ENCODE measurements at regions of chr2 and their contacts with region 1.

Region 1: GRCh38 chr2:19349911-19350677 is 8.3 kb downstream of the OSR1 start:
- DNase-seq: peak; percentile 87 to 95
- ATAC-seq: peak; percentile 65
- H3K4me3 ChIP-seq: no peak overlapping the region
- H3K27ac ChIP-seq: peak overlapping the region; percentile 85 to 92
- H3K4me1 ChIP-seq: peaks cover 0 to 2% of the 10 kb centered on the region in 2 donors
- H3K27me3 ChIP-seq: no peaks in the 10 kb centered on the region

Region 2: GRCh38 chr2:18435421-18436037 is 914.6 kb before region 1 on chr2:
- intact Hi-C with region 1: loop called (anchors 10 kb)
- DNase-seq: no peak
- ATAC-seq: peak; percentile 72
- H3K4me3 ChIP-seq: no peak overlapping the region
- H3K27ac ChIP-seq: no peak overlapping the region
- H3K4me1 ChIP-seq: peaks cover 0 to 2% of the 10 kb centered on the region in 2 donors
- H3K27me3 ChIP-seq: no peaks in the 10 kb centered on the region

Region 3: DNA sequence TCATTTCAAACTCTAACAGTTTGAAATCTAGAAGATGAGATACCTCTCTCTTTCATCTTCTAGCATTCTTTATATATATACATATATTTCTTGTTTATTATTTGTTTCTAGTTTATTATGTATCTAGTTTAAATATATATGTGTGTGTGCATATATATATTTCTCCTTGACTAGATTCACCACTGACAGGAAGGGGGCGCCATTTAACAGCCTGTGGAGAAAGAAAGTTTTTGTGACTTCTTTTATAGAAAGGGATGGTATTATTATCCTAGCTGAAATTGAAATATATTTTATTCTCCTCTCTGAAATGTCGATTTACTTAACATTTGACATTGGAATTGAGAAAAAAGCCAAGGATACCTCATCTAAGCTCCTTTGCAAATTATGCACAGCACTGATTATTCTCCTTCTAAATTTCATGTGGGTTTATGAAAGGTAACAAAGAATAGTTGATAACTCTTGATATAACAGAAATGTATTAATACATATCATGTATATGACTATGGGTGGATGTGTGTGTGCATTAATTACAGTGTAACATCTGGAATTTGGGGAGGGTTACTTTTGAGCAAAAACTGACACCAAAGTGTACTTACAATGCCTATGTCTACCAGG is 600.1 kb before region 1 on chr2:
- intact Hi-C with region 1: loop called in 1 of 2 experiments (anchors 5 kb)
- DNase-seq: peak; percentile 56 to 68
- ATAC-seq: peak; percentile 82
- H3K4me3 ChIP-seq: no peak overlapping the region
- H3K27ac ChIP-seq: no peak overlapping the region
- H3K4me1 ChIP-seq: peaks cover 0 to 2% of the 10 kb centered on the region in 2 donors
- H3K27me3 ChIP-seq: no peaks in the 10 kb centered on the region

Region 4: DNA sequence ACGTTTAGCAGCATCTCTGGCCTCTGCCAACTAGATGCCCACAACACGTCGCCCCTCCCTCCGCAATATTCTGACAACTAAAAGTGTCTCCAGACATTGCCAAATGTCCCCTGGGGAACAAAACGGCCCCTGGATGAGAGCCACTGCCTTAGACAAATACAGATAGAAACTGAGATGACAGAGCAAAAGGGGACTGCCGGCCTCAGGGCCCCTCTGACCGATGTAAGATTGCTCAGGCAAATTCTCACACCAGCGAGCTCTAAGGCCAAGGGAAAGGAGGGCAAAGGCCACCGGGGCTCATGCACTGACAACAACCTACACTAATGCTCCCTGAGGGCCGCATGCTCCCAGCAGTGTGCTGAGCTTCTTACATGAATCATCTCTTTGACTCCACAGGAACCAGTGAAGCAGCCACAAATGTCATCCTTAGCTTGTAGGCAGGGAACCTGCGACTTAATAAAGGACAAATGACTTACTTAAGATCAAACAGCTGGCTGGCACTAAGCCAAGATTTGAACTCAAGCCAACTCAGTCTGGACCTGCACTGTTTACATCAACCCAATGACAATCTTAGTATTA is 323.2 kb after region 1 on chr2:
- intact Hi-C with region 1: loop called in 1 of 2 experiments (anchors 10 kb)
- DNase-seq: no peak
- ATAC-seq: no peak
- H3K4me3 ChIP-seq: no peak overlapping the region
- H3K27ac ChIP-seq: no peak overlapping the region
- H3K4me1 ChIP-seq: peaks cover 0 to 2% of the 10 kb centered on the region in 2 donors
- H3K27me3 ChIP-seq: no peaks in the 10 kb centered on the region

Region 5: DNA sequence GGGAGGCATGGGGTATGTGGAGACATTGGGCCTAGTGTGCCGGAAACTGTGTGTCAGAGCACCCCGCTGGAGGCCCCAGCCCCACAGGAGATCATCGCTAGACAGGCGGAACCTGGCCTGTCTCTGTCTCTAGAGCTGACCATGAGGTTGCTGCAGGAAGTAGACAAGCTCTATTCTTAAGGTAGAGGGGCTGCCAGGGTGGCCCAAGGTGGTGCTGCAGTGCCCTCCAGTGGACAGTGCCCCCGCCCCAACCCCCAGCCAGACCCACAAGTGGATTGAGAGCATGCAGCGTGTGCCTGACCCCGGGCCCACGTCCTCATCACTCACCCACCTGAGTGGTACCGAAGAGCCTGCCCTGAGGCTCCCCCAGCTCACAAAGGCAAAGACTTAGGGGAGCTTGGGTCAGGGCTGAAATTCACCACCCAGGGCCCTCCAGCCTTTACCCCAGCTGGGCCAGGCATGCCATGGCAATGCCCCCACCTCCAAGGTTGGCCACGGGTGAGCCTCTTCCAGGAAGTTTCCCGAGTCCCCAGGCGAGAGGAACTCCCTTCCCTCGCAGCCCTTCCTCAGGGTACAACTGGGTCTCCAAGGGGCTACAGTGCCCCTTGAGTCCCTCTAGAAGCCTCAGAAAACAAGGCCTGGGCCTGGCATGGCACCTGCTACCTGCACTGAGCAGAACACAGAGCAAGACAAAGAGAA is 396.7 kb after region 1 on chr2:
- intact Hi-C with region 1: loop called in 1 of 2 experiments (anchors 5 kb)
- DNase-seq: no peak
- ATAC-seq: peak; percentile 33
- H3K4me3 ChIP-seq: no peak overlapping the region
- H3K27ac ChIP-seq: peak overlapping the region; percentile 73 to 87
- H3K4me1 ChIP-seq: peaks cover 0 to 6% of the 10 kb centered on the region in 2 donors
- H3K27me3 ChIP-seq: no peaks in the 10 kb centered on the region

Measured in aorta (tissue), 5 donors.